HepG2 (cell line): ENCODE measurements at regions of chr1 and their contacts with region 1.

Region 1: GRCh38 chr1:244695940-244696339 is 43.0 kb downstream of the DESI2 start:
- DNase-seq: no peak
- ATAC-seq: no peak
- H3K4me3 ChIP-seq: no peak overlapping the region
- H3K27ac ChIP-seq: no peak overlapping the region
- H3K4me1 ChIP-seq: no peaks in the 10 kb centered on the region
- H3K27me3 ChIP-seq: no peaks in the 10 kb centered on the region; a peak in 1 of 5 replicates
- CTCF ChIP-seq: no peak
- EP300 ChIP-seq: no peak
- POLR2A ChIP-seq: no peak
- RAD21 ChIP-seq: no peak

Region 2: DNA sequence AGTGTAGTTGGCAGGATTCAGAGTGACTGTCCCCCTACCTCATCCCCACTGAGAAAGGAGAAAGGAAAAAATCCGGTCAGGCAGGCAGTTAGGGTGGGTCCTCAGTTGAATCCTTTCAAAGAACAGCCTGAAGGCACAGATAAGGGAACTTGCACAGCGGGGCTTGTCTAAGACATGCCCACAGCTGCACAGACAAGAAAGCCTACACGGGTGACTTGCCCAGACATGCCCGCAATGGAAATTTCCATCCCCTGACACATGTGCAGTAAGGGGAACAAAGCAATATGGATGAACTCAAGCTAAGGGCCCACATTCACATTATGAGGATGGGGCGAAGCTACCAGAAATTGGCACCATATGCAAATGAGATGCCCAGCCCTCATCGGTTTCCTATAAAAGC is 39.5 kb after region 1 on chr1:
- CTCF ChIA-PET with region 1: no interaction called
- POLR2A ChIA-PET with region 1: no interaction called
- in situ Hi-C with region 1: no loop called
- intact Hi-C with region 1: loop called (anchors 2 kb)
- DNase-seq: no peak
- ATAC-seq: no peak
- H3K4me3 ChIP-seq: no peak overlapping the region
- H3K27ac ChIP-seq: no peak overlapping the region
- H3K4me1 ChIP-seq: no peaks in the 10 kb centered on the region
- H3K27me3 ChIP-seq: peaks cover 0 to 16% of the 10 kb centered on the region in 2 experiments; a peak in 3 of 5 replicates
- CTCF ChIP-seq: no peak
- EP300 ChIP-seq: no peak
- POLR2A ChIP-seq: no peak
- RAD21 ChIP-seq: no peak